GM12878 (cell line): ENCODE measurements at regions of chr14 and their contacts with region 1.

Region 1: DNA sequence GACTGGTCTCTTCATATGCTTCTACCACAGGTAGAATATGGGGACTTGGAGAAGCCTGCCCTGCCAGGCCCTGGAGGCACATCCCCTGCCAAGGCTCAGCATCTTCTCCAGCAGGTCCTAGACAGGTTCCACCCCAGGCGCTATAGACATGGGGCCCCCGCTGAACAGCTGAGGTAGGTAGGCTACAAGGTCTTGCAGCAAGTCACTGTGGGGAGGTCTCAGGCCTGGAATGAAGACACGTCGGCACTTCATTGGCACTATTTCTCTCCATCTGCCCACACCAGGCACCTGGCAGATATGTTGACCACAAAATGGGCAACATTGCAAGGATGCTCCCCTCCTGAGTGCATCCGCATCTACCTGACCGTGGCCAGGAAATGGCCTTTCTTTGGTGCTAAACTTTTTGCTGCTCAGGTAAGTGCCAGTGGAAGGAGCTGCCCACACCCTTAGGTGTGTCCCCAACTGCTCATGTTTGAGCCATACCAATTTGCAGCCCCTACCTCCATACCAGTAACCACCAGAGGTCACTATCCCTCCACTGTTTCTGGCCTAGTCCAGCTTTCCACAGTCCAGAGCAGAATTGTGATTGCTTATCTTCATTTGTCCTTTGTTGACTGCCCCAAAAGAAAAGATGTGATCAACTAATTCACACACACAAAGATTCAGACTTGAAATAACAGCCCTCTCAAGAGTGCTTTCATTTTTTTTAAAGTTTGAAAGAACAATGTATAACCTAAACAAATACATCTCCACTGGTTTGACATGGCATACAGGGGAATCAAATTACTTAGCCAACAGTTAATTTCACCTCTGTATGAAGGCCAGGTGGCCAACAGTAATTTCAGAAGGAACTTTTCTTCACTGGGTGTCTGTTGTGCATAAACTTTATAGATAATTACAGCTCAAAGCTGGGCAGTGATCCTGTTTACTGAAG is 16.1 kb downstream of the PIGH start:
- DNase-seq: no peak
- ATAC-seq: peak; percentile 98
- H3K4me3 ChIP-seq: no peak overlapping the region
- H3K27ac ChIP-seq: no peak overlapping the region
- H3K4me1 ChIP-seq: no peaks in the 10 kb centered on the region
- H3K27me3 ChIP-seq: no peaks in the 10 kb centered on the region
- CTCF ChIP-seq: peak; percentile 77 to 83 (median 80)
- EP300 ChIP-seq: no peak
- POLR2A ChIP-seq: no peak
- RAD21 ChIP-seq: peak; percentile 96

Region 2: GRCh38 chr14:67167420-67168109 is 416.4 kb before region 1 on chr14:
- CTCF ChIA-PET with region 1: no interaction called
- POLR2A ChIA-PET with region 1: no interaction called
- RAD21 ChIA-PET with region 1: no interaction called
- SMC1A ChIA-PET with region 1: no interaction called
- in situ Hi-C with region 1: no loop called
- intact Hi-C with region 1: no loop called
- DNase-seq: no peak
- ATAC-seq: no peak
- H3K4me3 ChIP-seq: no peak overlapping the region
- H3K27ac ChIP-seq: no peak overlapping the region
- H3K4me1 ChIP-seq: no peaks in the 10 kb centered on the region
- H3K27me3 ChIP-seq: no peaks in the 10 kb centered on the region
- CTCF ChIP-seq: no peak
- EP300 ChIP-seq: no peak
- POLR2A ChIP-seq: no peak
- RAD21 ChIP-seq: no peak

Region 3: DNA sequence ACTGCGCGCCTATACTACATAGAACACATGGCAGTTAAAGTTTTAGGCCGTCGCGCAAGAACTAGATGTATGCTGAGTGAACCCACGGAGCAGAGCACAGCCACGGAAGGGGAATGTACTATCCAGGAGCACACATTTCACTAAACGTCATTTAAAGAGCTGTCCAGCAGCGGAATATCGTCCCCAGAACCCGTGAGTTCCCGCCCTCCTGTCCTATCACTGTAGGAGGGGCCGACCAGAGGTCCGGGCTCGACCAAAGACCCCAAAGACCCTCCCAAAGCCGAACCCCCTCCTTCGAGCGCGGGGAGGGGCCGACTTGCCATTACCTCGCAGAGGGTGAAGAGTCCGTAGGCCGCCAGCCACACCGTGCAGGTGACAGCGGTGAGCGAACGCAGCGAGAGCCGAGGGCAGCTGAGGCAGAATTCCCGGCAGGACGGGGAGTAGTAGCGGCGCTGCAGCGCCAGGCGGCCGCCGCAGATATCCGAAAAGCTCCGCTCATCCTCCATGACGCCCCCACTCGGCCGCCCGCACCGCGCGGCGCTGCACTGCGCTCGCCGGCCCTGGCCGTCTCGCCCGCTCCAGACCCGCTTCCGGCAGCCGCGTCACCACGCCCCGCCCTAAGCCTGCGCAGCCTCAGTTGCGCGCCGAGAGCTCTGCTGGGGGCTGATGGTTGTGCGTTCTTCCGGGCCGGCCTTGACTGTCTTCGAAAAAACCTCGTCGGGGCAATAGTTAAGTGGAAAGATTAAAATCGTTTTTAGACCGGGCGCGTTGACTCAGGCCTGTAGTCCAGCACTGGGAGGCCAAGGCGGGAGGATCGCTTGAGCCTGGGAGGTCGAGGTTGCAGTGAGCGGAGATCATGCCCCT is 16.0 kb after region 1 on chr14 and contains the start of gene PIGH:
- CTCF ChIA-PET with region 1: interaction called, 15 read pairs
- POLR2A ChIA-PET with region 1: no interaction called
- RAD21 ChIA-PET with region 1: interaction called, 13 read pairs
- SMC1A ChIA-PET with region 1: interaction called, 15 read pairs
- in situ Hi-C with region 1: no loop called
- intact Hi-C with region 1: no loop called
- DNase-seq: peak; percentile 56
- ATAC-seq: peak; percentile 96
- H3K4me3 ChIP-seq: peak within 1 kb of the TSS; percentile 85
- H3K27ac ChIP-seq: peak within 1 kb of the TSS; percentile 70
- H3K4me1 ChIP-seq: peaks cover 9% of the 10 kb centered on the region; the same call in 1 of the 2 replicates
- H3K27me3 ChIP-seq: no peaks in the 10 kb centered on the region
- CTCF ChIP-seq: peak; percentile 49 to 61 (median 50); a peak in 5 of 6 replicates
- EP300 ChIP-seq: no peak
- POLR2A ChIP-seq: peak; percentile 85
- RAD21 ChIP-seq: no peak
- polyA plus RNA-seq, gene PIGH: 15.5 to 17.8 TPM